AG04449 (cell line): ENCODE measurements at regions of chr11 and their contacts with region 1.

Region 1: DNA sequence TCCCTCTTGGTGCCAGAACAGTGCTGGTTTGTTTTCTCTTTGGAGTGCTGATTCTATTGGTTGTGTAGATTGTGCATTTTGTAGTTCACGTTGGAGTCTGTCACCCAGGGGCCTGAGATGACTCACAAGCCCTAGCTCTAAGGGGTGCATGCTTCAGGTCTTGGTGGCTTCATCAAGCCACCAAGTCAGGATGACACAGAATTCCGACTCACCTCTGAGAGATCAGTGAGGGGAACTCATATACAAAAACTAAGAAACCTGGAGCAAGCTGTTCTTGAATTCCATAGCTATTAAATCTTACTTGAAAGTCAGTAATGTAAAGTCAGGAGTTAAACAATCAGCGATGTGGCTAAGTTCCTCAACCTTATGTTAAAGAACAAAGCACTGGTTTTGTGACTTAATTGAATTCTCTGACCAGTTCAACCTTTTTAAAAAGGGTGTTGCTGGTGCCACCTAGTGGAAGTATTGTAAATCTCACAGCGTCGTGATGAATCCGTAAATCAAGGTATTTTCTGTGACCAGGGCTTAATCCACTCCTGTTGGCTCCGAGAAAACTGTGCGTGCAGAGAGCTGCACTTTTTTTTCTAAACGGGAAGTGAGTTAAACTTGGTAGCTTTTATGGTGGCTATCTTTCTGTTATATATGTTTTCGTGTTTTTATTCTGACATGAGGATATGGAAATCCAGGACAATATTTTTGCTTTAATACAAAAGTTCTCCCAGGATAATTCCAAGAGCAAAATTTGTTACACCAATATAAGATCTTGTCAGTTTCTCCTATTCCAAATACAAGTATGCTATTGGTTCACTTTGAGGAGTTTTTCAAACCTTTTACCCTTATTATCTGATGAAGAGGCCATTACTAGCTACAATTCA is 14.6 kb downstream of the MMP13 start:
- DNase-seq: no peak
- H3K4me3 ChIP-seq: no peak overlapping the region
- CTCF ChIP-seq: peak; percentile 52

Region 2: GRCh38 chr11:102794447-102794781 is 146.5 kb before region 1 on chr11:
- CTCF ChIA-PET with region 1: interaction called, 18 read pairs
- POLR2A ChIA-PET with region 1: no interaction called
- DNase-seq: no peak
- H3K4me3 ChIP-seq: no peak overlapping the region
- CTCF ChIP-seq: peak; percentile 41

Region 3: DNA sequence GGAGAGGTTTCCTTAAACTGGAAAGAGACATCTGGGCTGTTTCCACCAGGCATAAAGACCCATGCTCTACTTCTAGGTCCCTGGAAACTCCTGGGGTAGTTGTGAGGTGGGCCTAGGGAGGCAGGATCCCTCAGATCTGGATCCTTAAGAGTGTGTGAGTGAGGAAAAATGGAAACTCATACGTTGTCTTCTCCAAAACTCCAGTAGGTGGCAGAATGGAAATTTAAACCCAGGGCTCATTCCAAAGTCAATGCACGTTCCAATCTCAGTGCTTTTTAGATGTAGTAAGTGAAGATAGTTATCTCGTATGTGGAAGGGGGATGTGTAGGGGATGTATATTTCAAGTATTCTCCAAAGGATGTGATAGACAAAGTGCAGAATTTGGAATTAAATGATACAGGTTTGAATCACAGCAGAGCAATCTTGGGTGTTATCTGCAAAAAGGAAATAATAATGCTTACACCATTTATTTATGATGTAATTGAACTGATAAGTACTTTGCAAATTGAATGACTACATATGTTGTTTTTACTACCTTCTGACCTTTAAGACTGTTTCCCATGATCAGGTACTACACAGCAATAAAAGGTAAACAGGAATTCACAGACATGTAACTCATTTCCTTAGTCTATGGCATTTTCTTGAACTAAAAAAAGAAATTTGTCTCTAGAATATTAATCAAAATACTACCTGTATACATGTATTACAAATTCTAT is 129.8 kb before region 1 on chr11:
- CTCF ChIA-PET with region 1: interaction called, 19 read pairs
- POLR2A ChIA-PET with region 1: no interaction called
- DNase-seq: no peak
- H3K4me3 ChIP-seq: no peak overlapping the region
- CTCF ChIP-seq: peak; percentile 35

Region 4: GRCh38 chr11:102831489-102832440 is 109.2 kb before region 1 on chr11:
- CTCF ChIA-PET with region 1: interaction called, 54 read pairs
- POLR2A ChIA-PET with region 1: no interaction called
- DNase-seq: no peak
- H3K4me3 ChIP-seq: peak overlapping the region; percentile 52
- CTCF ChIP-seq: peak; percentile 83

Region 5: DNA sequence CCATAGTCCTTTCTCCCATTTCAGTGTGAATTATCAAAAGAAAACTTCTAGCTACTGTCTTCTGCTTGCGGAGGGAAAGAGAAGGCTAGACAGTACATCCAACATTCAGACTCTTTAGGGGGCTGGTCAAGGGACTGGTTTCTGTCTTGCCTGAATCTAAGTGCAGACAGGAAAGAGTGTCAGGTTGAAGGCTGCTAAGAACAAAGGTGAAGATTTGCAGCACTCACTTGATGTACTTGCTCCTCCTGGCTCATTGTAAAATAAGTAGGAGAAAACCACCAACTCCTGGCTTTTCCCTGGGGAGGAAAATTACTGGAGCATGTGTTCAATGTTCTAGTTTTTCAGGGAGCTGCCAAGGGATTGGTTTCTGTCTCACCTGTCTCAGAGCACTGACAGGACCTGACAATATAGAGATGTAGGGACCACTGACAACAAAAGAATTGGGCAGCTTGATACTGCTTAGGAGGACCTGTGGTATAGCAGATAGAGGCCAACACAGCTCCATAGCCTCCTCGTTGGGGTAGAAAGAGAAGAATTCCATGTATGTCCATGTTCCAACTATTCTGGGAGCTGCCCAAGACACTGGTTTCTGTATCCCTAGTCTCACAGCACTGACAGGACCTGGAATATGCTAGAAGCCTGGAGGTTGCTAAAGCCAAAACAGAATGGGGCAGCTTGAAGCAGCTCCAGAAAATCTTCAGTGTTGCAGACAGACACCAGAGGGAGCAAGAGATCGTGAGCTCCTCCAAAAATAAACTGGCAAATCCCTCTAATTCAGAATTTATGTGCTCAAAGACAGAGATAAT is 26.5 kb before region 1 on chr11:
- CTCF ChIA-PET with region 1: interaction called, 102 read pairs
- POLR2A ChIA-PET with region 1: no interaction called
- DNase-seq: no peak
- H3K4me3 ChIP-seq: no peak overlapping the region
- CTCF ChIP-seq: peak; percentile 68

Region 6: DNA sequence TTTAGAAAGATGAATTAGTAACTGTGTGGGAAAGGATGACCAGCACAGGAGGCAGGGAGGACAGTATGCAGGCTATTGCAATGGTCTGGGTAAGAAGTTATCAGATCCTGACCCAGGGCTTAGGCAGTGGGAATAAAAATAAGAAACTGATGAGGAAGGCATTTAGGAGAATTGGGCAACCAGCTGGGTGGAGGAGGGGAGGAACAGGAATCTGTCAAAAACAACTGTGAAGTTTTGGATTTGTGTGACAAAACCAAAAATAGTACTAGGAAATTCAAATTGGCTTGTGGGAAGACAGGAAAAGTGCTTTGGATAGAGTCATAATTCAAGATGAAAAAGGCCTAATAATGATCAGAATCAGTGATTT is 13.3 kb before region 1 on chr11:
- CTCF ChIA-PET with region 1: interaction called, 73 read pairs
- POLR2A ChIA-PET with region 1: no interaction called
- DNase-seq: no peak
- H3K4me3 ChIP-seq: no peak overlapping the region
- CTCF ChIP-seq: no peak

Region 7: DNA sequence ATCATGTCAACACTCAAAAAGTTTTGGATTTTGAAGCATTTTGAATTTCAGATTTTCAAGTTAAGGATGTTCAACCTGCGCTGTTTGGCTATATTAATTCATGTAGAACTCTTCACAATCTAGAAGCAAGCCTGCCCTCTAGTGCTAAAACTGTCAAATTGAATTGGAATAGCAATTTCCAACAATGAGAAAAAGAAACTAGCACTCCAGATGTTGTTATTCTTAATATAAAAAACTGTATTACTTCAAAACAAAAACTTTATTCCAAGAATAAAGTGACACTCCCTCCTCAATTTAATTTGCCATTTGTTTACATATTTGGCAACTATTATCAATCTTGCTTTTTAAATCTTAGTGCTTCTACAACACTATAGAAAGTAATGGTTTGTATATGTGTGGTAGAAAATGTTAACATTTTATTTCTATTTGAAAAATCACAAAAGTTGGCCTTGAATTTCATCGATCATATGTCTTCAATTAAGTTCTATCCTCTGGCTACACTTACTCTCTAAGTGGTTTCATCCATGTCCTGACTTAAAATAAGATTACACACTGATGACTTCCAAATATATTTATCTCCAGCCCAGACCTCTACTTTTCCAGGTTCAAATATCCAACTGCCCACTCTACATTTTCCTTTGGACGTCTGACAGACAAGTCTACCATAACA is 114.4 kb after region 1 on chr11:
- CTCF ChIA-PET with region 1: interaction called, 11 read pairs
- POLR2A ChIA-PET with region 1: no interaction called
- DNase-seq: no peak
- H3K4me3 ChIP-seq: no peak overlapping the region
- CTCF ChIP-seq: peak; percentile 43

Region 8: GRCh38 chr11:103070142-103070541 is 129.2 kb after region 1 on chr11:
- CTCF ChIA-PET with region 1: no interaction called
- POLR2A ChIA-PET with region 1: no interaction called
- DNase-seq: no peak
- H3K4me3 ChIP-seq: no peak overlapping the region
- CTCF ChIP-seq: no peak